Mammary epithelial cell (primary cell): ENCODE measurements at regions of chrX and their contacts with region 1.

Region 1: DNA sequence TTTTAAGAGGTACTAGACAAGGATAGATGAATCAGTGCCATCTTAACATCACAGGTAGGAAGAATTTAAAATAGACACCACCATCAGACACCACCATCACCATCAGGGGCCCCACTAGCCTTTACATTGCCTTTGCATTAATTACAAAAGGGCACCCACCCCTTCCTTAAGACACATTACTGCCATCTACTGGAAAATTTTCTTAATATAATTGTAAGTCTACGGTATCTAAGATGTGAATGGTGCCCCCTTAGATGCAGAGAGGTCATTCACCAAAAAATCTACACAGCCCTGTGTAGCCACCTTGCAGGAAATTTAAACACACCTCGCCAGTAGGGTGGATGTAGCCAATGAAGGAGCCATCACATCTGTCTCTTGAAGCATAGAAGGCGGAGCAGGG is 184.1 kb downstream of the MID1IP1 start:
- DNase-seq: no peak
- H3K4me3 ChIP-seq: no peak overlapping the region
- H3K27ac ChIP-seq: no peak overlapping the region
- H3K4me1 ChIP-seq: no peaks in the 10 kb centered on the region
- H3K27me3 ChIP-seq: no peaks in the 10 kb centered on the region
- CTCF ChIP-seq: peak in 1 of 2 donors; percentile 34

Region 2: GRCh38 chrX:38664285-38664684 is 321.1 kb before region 1 on chrX:
- CTCF ChIA-PET with region 1: no interaction called
- dilution Hi-C with region 1: no loop called
- in situ Hi-C with region 1: no loop called
- intact Hi-C with region 1: loop called (anchors 2 kb)
- DNase-seq: peak; percentile 25
- H3K4me3 ChIP-seq: no peak overlapping the region
- H3K27ac ChIP-seq: no peak overlapping the region
- H3K4me1 ChIP-seq: no peaks in the 10 kb centered on the region
- H3K27me3 ChIP-seq: peaks cover 6% of the 10 kb centered on the region
- CTCF ChIP-seq: peak; percentile 31 to 56

Region 3: GRCh38 chrX:38768079-38768478 is 217.3 kb before region 1 on chrX:
- CTCF ChIA-PET with region 1: interaction called, 5 read pairs
- dilution Hi-C with region 1: no loop called
- in situ Hi-C with region 1: loop called (anchors 10 to 25 kb)
- intact Hi-C with region 1: loop called (anchors 1 kb)
- DNase-seq: peak; percentile 6
- H3K4me3 ChIP-seq: no peak overlapping the region
- H3K27ac ChIP-seq: no peak overlapping the region
- H3K4me1 ChIP-seq: no peaks in the 10 kb centered on the region
- H3K27me3 ChIP-seq: peaks cover 7% of the 10 kb centered on the region
- CTCF ChIP-seq: peak; percentile 29 to 51

Region 4: GRCh38 chrX:38803586-38804431 is 181.6 kb before region 1 on chrX:
- CTCF ChIA-PET with region 1: no interaction called
- dilution Hi-C with region 1: no loop called
- in situ Hi-C with region 1: no loop called
- intact Hi-C with region 1: loop called (anchors 1 kb)
- DNase-seq: peak; percentile 79
- H3K4me3 ChIP-seq: peak overlapping the region; percentile 57 to 76 (median 64)
- H3K27ac ChIP-seq: peak overlapping the region; percentile 78
- H3K4me1 ChIP-seq: peaks cover 18% of the 10 kb centered on the region
- H3K27me3 ChIP-seq: no peaks in the 10 kb centered on the region
- CTCF ChIP-seq: no peak

Region 5: DNA sequence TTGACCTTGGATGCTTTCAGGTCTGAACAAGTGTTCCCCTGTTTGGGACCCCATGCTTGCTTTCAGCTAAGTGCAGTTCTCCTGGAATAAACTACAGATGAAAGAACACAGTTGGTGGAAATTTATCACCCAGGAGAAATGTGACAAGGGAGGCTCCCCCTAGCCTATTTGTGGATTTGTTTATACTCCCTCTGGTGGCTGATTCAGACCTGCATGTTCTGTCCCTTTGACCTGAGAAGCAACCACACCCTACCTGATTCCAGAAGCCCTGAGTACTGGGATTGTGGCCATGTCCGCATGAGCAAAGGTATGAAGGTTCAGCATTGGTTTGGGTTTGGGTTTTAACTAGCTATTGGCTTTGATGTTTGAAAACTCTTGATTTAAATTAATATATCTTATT is 256.8 kb after region 1 on chrX:
- CTCF ChIA-PET with region 1: no interaction called
- dilution Hi-C with region 1: no loop called
- in situ Hi-C with region 1: no loop called
- intact Hi-C with region 1: loop called (anchors 10 kb)
- DNase-seq: peak; percentile 14
- H3K4me3 ChIP-seq: no peak overlapping the region
- H3K27ac ChIP-seq: no peak overlapping the region
- H3K4me1 ChIP-seq: no peaks in the 10 kb centered on the region
- H3K27me3 ChIP-seq: peaks cover 3% of the 10 kb centered on the region
- CTCF ChIP-seq: peak; percentile 45 to 54

Region 6: GRCh38 chrX:39409246-39409917 is 424.0 kb after region 1 on chrX:
- CTCF ChIA-PET with region 1: no interaction called
- dilution Hi-C with region 1: no loop called
- in situ Hi-C with region 1: no loop called
- intact Hi-C with region 1: no loop called
- DNase-seq: peak; percentile 3
- H3K4me3 ChIP-seq: no peak overlapping the region
- H3K27ac ChIP-seq: no peak overlapping the region
- H3K4me1 ChIP-seq: no peaks in the 10 kb centered on the region
- H3K27me3 ChIP-seq: no peaks in the 10 kb centered on the region
- CTCF ChIP-seq: no peak